Right cardiac atrium (tissue), 5 donors: ENCODE measurements at regions of chr11 and their contacts with region 1.

Region 1: DNA sequence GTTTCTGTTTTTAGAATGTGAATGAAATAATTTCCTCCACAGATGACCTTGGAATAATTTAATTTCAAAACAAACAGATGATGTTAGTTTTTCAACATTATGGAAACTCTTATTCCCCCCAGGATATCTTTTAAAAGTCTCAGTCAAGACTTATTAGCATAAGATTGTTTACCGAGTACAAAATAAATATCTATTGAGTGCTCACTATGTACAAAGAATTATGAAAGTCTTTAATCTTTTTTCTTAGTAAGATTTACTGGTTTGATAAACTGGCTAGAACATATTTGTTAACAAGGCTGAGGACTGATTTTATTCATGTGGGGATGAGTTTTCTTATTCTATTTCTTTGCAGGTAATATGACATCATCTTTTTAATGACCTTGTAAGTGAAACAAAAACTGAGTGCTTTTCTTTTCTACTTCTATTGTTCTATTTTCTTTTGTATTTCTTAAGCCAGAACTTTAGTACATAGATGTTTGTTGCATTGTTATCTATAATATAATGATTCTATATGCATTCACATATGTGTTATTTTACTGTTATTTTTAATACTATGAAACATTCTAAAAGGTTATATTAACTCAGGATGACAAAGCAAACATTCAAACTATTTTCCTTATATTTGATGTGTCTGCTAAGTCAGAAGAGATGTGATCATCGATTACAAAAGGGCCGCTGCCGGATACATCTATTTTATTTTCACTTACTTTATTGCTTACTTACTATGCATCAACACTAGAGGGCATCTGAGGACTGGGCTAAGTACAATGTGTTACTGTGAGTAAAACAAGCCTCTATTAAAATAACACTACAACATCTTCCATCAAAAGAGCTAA is 111.0 kb upstream of the ARHGAP42 start:
- DNase-seq: no peak
- ATAC-seq: peak; percentile 63 to 79
- H3K4me3 ChIP-seq: no peak overlapping the region
- H3K27ac ChIP-seq: no peak overlapping the region
- H3K4me1 ChIP-seq: no peaks in the 10 kb centered on the region
- H3K27me3 ChIP-seq: no peaks in the 10 kb centered on the region

Region 2: DNA sequence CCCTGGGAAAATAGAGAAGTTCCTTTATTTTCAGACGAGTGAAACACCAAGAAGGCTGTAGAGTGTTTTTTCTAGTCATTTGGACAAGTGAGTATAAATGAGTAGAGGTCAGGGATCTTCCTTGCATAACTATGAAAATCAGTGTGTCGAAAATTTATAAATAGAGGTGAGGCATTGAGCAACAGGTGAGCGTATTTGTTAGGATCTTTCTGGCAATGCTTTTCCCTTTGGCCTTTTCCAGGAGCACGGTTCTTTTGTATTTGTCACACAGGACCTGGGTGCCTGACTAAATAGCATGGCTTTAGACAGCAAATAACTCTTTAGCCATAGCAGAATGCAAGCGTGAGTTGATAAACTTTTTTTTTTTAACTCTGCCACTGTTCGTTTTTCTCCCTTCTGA is 91.4 kb after region 1 on chr11:
- intact Hi-C with region 1: no loop called
- DNase-seq: no peak
- ATAC-seq: no peak
- H3K4me3 ChIP-seq: no peak overlapping the region
- H3K27ac ChIP-seq: no peak overlapping the region
- H3K4me1 ChIP-seq: no peaks in the 10 kb centered on the region
- H3K27me3 ChIP-seq: no peaks in the 10 kb centered on the region

Region 3: GRCh38 chr11:100930185-100930778 is 354.2 kb after region 1 on chr11:
- intact Hi-C with region 1: loop called (anchors 2 to 10 kb)
- DNase-seq: no peak
- ATAC-seq: peak in 1 of 2 donors; percentile 51
- H3K4me3 ChIP-seq: no peak overlapping the region
- H3K27ac ChIP-seq: no peak overlapping the region
- H3K4me1 ChIP-seq: no peaks in the 10 kb centered on the region
- H3K27me3 ChIP-seq: no peaks in the 10 kb centered on the region

Region 4: GRCh38 chr11:100970283-100971164 is 394.4 kb after region 1 on chr11:
- intact Hi-C with region 1: no loop called
- DNase-seq: peak in 1 of 3 donors; percentile 42
- ATAC-seq: peak; percentile 64 to 80
- H3K4me3 ChIP-seq: no peak overlapping the region
- H3K27ac ChIP-seq: peak overlapping the region; percentile 88
- H3K4me1 ChIP-seq: peaks cover 5% of the 10 kb centered on the region
- H3K27me3 ChIP-seq: no peaks in the 10 kb centered on the region